ENCODE measurements at regions of chr2 and their contacts with region 1.

Region 1: DNA sequence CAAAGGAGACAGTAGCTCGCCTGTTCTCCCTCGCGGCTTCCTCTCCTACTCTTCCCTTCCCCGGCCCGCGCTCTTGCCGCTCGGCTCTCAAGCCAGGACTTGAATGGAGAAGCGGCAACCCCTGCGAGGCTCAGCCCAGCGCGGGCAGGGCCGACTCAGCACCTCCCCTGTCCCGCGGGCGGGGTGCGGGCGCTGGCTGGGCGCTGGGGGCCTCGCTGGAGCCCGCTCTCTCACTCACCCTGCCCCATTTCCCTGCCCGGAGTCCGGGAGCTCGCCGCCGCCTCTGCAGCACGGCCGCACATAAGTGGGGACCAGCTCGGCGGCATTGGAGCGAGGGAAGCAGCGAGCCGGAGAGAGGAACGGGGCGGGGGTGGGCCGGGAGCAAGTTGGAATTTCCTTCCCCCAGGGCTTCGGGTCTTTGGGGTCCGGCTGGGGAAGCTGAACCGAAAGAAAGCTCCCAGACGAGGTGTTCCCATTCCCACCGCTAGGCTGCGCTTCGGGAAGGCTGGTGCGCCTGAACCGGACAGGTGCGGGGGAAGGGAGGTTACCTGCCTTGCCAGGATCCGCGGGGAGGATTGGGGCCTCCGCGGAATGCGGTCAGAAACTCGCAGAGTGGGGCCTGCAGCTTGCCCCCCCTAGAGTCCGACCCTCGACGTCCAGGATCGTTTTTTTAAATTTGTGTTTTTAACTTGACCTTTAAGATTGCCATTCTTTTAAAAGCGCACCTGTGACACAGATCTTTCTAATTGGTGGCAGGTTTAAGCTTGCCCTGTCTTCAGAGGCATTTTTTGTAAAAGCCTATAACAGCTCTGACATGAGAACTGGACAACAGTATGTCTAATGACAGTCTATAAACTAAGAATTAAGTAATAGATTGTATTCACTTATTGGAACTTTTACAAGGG is at the start of gene COBLL1:
- DNase-seq: peak; percentile 78
- H3K4me3 ChIP-seq: peak within 1 kb of the TSS; percentile 48 to 84 (median 80)
- H3K27ac ChIP-seq: peak within 1 kb of the TSS; percentile 74
- H3K4me1 ChIP-seq: peaks cover 19% of the 10 kb centered on the region
- H3K27me3 ChIP-seq: no peaks in the 10 kb centered on the region
- CTCF ChIP-seq: peak; percentile 71 to 85
- POLR2A ChIP-seq: no peak
- total RNA-seq, gene COBLL1: 38.2 and 38.4 TPM in 2 replicates

Region 2: DNA sequence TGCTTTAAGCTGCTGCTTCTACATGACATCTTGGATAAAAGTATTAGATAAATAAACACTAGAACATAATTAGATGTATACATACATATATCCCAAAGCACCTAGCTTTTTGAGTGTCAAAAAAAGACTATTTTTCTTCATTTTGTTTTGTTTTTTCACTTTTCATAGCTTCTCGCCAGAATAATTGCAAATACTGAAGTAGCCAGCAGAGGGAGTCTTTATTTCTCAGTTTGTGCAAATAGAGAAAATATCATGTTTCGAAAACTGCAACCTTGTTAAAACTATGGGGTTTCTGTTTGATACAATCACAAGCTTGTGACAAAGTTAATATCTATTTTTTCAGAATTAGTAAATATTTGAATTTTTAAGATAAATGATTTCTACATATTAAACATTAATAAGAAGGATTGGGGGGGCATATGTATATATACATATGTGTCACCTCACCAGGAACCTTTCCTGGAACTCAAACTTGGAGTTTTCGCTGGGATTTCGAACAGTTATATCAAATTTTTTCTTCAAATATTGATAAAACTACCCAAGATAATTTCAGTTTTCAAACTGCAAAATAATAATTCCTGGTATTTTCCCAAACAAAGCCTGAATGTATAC is 281.7 kb before region 1 on chr2:
- CTCF ChIA-PET with region 1: no interaction called
- POLR2A ChIA-PET with region 1: no interaction called
- dilution Hi-C with region 1: no loop called
- intact Hi-C with region 1: no loop called
- DNase-seq: peak; percentile 67
- H3K4me3 ChIP-seq: no peak overlapping the region
- H3K27ac ChIP-seq: no peak overlapping the region
- H3K4me1 ChIP-seq: peaks cover 22% of the 10 kb centered on the region
- H3K27me3 ChIP-seq: no peaks in the 10 kb centered on the region
- CTCF ChIP-seq: peak; percentile 45 to 47
- POLR2A ChIP-seq: no peak

Region 3: GRCh38 chr2:164697674-164698461 is 144.1 kb before region 1 on chr2:
- CTCF ChIA-PET with region 1: no interaction called
- POLR2A ChIA-PET with region 1: no interaction called
- dilution Hi-C with region 1: no loop called
- intact Hi-C with region 1: loop called (anchors 1 kb)
- DNase-seq: peak; percentile 51
- H3K4me3 ChIP-seq: no peak overlapping the region
- H3K27ac ChIP-seq: no peak overlapping the region
- H3K4me1 ChIP-seq: peaks cover 4% of the 10 kb centered on the region
- H3K27me3 ChIP-seq: no peaks in the 10 kb centered on the region
- CTCF ChIP-seq: peak; percentile 16 to 42
- POLR2A ChIP-seq: no peak

Region 4: GRCh38 chr2:164770421-164770916 is 71.5 kb before region 1 on chr2:
- CTCF ChIA-PET with region 1: interaction called, 7 read pairs
- POLR2A ChIA-PET with region 1: no interaction called
- dilution Hi-C with region 1: no loop called
- intact Hi-C with region 1: loop called (anchors 1 kb)
- DNase-seq: peak; percentile 84
- H3K4me3 ChIP-seq: peak overlapping the region in 1 of 3 experiments; percentile 55
- H3K27ac ChIP-seq: peak overlapping the region; percentile 67
- H3K4me1 ChIP-seq: peaks cover 18% of the 10 kb centered on the region
- H3K27me3 ChIP-seq: no peaks in the 10 kb centered on the region
- CTCF ChIP-seq: no peak
- POLR2A ChIP-seq: peak; percentile 54

Region 5: DNA sequence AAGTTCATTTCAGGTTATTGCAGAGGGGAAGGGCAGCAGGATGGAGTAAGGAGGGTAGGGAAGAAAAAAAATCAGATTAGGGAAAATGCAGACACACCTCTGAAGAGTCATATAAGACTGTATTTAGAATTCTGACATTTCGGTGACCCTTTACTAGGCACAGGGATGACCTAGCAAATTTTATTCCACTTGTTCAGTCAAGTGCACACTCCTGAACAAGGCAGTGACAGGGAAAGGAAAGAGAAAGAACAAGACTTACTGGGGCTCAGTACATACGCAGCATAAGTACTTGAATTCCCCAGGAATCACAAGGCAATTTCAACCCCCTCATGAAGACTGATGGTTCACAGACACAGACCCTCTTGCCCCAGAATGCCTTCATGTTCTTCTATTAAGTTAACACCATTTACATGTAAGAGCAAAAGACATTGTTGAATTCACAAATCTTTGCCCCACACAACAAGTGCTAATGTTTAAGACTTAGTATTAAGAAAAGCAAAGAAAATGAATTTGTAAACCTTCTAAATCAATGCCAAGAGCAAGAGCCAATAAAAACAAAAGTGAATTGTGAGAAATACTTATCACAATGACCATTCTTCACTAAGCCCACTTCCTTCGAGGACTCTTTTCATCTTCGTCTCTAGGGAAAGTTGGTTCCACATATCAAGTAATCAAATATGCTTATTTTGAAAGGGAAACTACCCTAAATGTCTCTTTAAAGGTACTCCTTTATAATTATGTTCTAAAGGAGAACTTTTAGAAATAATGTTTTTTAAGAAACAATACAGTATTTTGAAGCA is 47.3 kb before region 1 on chr2:
- CTCF ChIA-PET with region 1: interaction called, 8 read pairs
- POLR2A ChIA-PET with region 1: no interaction called
- dilution Hi-C with region 1: no loop called
- intact Hi-C with region 1: loop called (anchors 2 kb)
- DNase-seq: peak; percentile 94
- H3K4me3 ChIP-seq: peak overlapping the region in 1 of 3 experiments; percentile 22
- H3K27ac ChIP-seq: peak overlapping the region; percentile 45
- H3K4me1 ChIP-seq: peaks cover 10% of the 10 kb centered on the region
- H3K27me3 ChIP-seq: no peaks in the 10 kb centered on the region
- CTCF ChIP-seq: no peak
- POLR2A ChIP-seq: no peak

Region 6: DNA sequence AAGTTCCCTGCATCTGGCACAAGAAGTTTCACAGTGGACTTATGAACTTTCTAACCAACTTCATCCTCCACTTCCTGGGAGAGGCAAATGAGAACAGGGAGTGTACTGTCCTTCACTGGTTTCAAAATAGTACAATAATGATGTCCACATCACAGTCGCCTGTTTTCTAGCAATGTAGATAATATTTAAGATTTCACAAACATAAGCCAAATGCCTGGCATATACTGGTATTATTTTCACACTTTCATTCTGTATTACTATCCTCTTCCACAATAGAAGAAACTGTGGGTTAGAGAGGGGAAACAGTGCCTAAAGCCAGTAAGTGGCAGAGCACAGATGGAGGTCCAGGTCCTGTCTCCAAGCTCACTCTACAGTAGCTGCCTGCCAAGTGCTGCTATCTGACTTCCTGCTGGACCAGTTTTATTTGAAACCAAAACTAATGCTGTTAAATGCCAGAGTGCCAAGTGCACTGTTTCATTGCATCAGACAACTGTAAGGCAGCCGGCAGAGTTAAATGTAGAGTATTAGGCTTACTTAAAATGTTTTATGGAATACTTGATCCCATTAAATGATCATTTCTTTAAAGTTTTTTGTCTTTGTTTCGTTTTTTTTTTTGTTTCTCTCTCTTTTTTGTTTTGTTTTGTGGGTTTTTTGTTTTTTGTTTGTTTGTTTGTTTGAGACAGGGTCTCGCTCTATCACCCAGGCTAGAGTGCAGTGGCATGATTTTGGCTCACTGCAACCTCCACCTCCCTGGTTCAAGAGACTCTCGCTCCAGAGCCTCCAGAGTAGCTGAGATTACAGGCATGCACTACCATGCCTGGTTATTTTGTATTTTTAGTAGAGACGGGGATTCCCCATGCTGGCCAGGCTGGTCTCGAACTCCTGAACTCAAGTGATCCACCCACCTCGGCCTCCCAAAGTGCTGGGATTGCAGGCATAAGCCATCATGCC is 15.4 kb before region 1 on chr2:
- CTCF ChIA-PET with region 1: interaction called, 26 read pairs
- POLR2A ChIA-PET with region 1: interaction called, 5 read pairs
- dilution Hi-C with region 1: no loop called
- intact Hi-C with region 1: no loop called
- DNase-seq: peak; percentile 66
- H3K4me3 ChIP-seq: no peak overlapping the region
- H3K27ac ChIP-seq: no peak overlapping the region
- H3K4me1 ChIP-seq: peaks cover 2% of the 10 kb centered on the region
- H3K27me3 ChIP-seq: no peaks in the 10 kb centered on the region
- CTCF ChIP-seq: no peak
- POLR2A ChIP-seq: no peak

Region 7: DNA sequence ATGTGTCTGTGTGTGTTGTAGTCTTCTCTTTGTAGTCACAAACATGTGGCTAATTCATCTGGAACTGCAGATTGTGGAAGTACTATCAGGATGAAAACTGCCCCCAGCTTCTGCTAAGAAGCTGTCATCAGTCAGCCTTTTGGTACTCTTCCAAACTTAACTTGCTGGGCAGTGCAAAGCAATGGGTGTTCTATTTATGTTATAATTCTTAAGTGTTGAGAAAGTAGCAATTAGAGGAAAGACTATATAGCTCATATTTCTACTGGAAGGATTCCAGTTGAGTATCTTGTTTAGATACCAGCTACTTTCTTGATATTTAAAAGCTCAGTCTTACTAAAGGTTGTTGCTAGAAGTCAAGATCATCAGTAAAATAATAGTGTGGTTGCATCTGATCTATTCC is 61.2 kb after region 1 on chr2:
- CTCF ChIA-PET with region 1: interaction called, 32 read pairs
- POLR2A ChIA-PET with region 1: interaction called, 5 read pairs
- dilution Hi-C with region 1: no loop called
- intact Hi-C with region 1: loop called (anchors 5 kb)
- DNase-seq: peak; percentile 69
- H3K4me3 ChIP-seq: no peak overlapping the region
- H3K27ac ChIP-seq: no peak overlapping the region
- H3K4me1 ChIP-seq: peaks cover 19% of the 10 kb centered on the region
- H3K27me3 ChIP-seq: no peaks in the 10 kb centered on the region
- CTCF ChIP-seq: no peak
- POLR2A ChIP-seq: no peak

Region 8: DNA sequence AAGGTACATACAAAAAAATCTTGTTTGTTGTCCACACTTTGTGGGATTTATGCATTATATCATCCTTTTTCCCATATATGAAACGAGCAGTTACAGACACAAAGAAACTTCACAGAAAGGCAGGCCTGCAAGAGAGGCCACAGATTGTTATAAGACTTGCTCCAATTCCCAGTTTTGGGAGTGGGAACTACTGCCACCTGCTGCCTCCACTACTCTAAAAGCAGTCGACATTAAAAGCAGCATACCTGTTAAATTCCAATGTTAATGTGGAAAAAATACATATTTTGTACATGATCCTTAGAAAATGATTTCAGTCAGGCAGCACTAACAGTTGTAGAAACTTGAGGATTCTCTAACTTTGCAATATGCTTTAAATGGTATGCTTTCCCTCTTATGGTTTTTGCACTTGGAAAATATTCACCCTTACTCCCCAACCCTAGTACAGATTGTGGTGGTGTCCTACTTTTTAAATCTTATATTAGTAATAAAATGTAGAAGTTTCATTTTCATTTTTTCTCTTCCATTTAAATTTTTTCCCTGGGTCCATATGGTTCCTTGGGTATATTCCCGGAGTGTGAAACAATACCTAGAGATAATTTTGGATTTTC is 75.4 kb after region 1 on chr2:
- CTCF ChIA-PET with region 1: interaction called, 34 read pairs
- POLR2A ChIA-PET with region 1: no interaction called
- dilution Hi-C with region 1: no loop called
- intact Hi-C with region 1: loop called (anchors 1 kb)
- DNase-seq: peak; percentile 73
- H3K4me3 ChIP-seq: no peak overlapping the region
- H3K27ac ChIP-seq: no peak overlapping the region
- H3K4me1 ChIP-seq: peaks cover 18% of the 10 kb centered on the region
- H3K27me3 ChIP-seq: no peaks in the 10 kb centered on the region
- CTCF ChIP-seq: peak; percentile 21 to 46
- POLR2A ChIP-seq: no peak

Measured in endothelial cell of umbilical vein (primary cell).